ENCODE measurements at regions of chr1 and their contacts with region 1.

Region 1: DNA sequence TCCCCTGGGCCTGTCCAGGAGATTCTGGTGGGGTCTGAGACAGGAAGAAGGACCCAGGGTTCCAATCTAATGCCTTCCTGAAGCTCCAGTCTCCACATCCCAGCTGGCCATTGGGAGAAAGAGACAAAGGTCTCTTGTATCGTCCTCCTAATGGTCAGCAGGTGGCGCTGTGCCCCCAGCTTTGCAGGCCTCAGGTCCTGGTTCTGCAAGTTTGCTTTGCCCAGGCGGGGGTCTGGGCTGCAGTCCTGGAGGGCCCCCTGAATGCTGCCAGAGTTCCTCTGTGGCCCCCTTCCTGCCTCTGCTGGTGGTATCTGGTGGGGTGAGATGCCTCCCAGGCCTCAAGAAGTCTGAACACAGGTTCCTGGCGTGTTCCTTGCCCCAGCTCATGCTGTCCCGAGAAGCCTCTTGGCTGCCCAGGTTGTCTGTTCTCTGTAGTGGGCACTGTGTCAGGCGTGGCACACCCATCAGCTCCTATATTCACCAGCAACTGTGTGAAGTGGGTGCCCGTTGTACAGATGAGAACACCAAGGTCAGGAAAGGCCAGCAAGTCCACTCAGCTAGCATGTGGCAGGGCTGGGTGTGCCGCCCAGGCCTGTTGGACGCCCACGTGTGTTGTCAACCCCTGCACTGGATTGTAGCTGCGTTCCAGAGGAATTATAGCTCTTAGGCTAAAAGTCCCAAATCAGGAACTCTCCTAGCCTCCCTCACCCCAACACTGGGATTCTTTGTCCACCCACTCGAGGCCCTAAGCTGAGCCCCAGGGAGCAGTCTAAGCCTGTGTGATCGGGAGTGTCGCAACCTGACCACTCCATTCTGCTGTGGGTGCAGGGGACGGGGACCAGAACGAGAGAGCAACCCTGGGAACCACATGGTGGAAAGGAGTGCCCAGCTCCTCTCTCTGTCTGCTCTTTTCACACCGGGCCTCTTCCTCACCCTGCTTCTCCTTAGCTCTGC is 33.9 kb upstream of the CSF3R start:
- DNase-seq: peak; percentile 45
- H3K4me3 Mint-ChIP-seq: no peak overlapping the region
- H3K27ac Mint-ChIP-seq: no peak overlapping the region
- H3K4me1 Mint-ChIP-seq: peaks cover 4% of the 10 kb centered on the region
- H3K27me3 Mint-ChIP-seq: no peaks in the 10 kb centered on the region

Region 2: GRCh38 chr1:36506276-36506920 is 10.3 kb before region 1 on chr1:
- CTCF ChIA-PET with region 1: interaction called, 13 read pairs
- POLR2A ChIA-PET with region 1: no interaction called
- DNase-seq: no peak
- H3K4me3 Mint-ChIP-seq: no peak overlapping the region
- H3K27ac Mint-ChIP-seq: no peak overlapping the region
- H3K4me1 Mint-ChIP-seq: no peaks in the 10 kb centered on the region
- H3K27me3 Mint-ChIP-seq: peaks cover 28% of the 10 kb centered on the region